Activated B cell treated with CpG ODN at 0.5 μM for 24 hours (primary cell): ENCODE measurements at regions of chr2 and their contacts with region 1.

Region 1: DNA sequence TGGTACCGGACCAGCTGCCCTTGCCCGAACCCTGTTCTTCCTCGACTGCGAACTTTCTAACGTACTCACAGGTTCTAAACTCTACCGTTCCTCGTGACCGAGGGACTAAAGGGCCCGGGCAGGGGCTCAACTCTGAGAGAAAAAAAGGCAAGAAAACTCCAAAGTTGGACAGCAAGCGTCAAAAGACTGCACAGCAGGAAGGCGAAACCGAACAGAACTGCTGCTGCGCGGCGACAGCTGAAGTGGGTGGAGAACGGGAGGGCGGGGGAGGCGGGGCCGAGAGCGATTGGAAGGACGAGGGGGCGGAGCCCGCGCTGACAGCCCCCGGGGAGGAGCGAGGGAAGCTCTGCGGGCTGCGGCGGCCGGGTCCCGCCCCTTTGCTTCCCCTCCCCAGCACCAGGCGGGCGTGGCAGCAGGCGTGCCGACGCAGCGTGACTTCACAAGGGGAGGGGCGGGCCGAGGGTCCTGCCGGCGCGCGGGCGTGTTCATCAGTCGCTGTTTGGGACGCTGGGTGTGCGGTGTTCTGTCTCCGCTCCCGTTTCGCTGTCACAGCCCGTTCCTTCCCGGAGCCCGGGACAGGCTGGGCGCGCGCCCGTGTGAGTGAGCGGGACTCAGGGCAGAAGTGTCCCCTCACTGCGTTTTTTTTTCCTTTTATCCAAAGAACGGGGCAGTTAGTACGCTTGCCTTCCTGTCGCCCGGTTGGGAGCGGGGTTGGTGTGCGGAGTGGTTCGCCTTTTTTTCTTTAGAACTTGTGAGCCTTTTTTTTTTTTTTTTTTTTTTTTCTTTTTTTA is at the start of gene NABP1:
- DNase-seq: peak; percentile 98
- ATAC-seq: peak; percentile 84
- H3K4me3 Mint-ChIP-seq: peak within 1 kb of the TSS; percentile 97
- H3K27ac Mint-ChIP-seq: peak within 1 kb of the TSS; percentile 99
- H3K4me1 Mint-ChIP-seq: peaks cover 64% of the 10 kb centered on the region
- H3K27me3 Mint-ChIP-seq: no peaks in the 10 kb centered on the region
- CTCF ChIP-seq: no peak
- total RNA-seq, gene NABP1: 69.6 and 86.0 TPM in 2 replicates

Region 2: DNA sequence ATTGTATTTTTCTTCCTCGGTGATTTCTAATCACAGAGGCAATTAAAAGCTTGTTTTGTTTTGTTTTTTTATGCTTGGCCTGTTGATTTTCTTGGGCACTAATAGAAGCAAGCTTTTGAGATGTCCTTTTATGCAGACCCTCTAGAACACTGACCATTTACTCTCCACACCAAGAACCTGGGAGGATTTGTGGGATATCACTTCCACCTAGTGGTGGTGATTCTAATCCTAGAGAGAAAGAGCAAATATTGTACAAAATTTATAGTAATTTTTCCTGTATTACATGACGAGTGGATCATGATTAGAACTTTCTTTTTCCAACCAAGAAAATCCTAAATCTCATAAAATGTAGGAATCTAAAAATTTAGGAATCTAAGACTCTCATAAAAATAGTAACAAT is 1166.7 kb before region 1 on chr2:
- CTCF ChIA-PET with region 1: no interaction called
- POLR2A ChIA-PET with region 1: interaction called, 15 read pairs
- intact Hi-C with region 1: no loop called
- DNase-seq: no peak
- ATAC-seq: no peak
- H3K4me3 Mint-ChIP-seq: no peak overlapping the region
- H3K27ac Mint-ChIP-seq: no peak overlapping the region
- H3K4me1 Mint-ChIP-seq: peaks cover 19% of the 10 kb centered on the region
- H3K27me3 Mint-ChIP-seq: no peaks in the 10 kb centered on the region
- CTCF ChIP-seq: no peak

Region 3: GRCh38 chr2:191013932-191014652 is 663.7 kb before region 1 on chr2 and contains the start of gene STAT1:
- CTCF ChIA-PET with region 1: no interaction called
- POLR2A ChIA-PET with region 1: interaction called, 17 read pairs
- intact Hi-C with region 1: loop called (anchors 2 kb)
- DNase-seq: peak; percentile 98
- ATAC-seq: peak; percentile 91
- H3K4me3 Mint-ChIP-seq: no peak within 1 kb of the TSS
- H3K27ac Mint-ChIP-seq: no peak within 1 kb of the TSS
- H3K4me1 Mint-ChIP-seq: peaks cover 29% of the 10 kb centered on the region
- H3K27me3 Mint-ChIP-seq: no peaks in the 10 kb centered on the region
- CTCF ChIP-seq: no peak
- total RNA-seq, gene STAT1: 71.2 and 85.1 TPM in 2 replicates

Region 4: DNA sequence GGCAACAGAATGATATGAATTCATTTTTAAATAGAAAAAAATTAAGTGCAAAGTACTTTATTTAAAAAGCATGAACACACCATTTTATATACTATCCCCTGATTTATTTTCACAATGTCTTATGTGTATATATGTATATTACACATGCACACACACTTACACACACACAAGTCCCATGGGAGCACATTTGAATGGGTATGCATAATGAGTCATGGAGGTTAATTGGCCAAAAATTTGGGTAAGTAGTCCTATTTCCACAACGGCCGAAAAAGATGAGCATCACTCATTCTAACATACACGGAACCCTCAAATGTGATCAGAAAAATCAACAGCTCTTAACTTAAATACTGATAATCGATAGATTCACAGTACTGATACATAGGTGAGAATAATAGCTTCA is 97.3 kb before region 1 on chr2:
- CTCF ChIA-PET with region 1: no interaction called
- POLR2A ChIA-PET with region 1: interaction called, 13 read pairs
- intact Hi-C with region 1: no loop called
- DNase-seq: no peak
- ATAC-seq: no peak
- H3K4me3 Mint-ChIP-seq: no peak overlapping the region
- H3K27ac Mint-ChIP-seq: no peak overlapping the region
- H3K4me1 Mint-ChIP-seq: peaks cover 9% of the 10 kb centered on the region
- H3K27me3 Mint-ChIP-seq: peaks cover 2% of the 10 kb centered on the region
- CTCF ChIP-seq: no peak

Region 5: DNA sequence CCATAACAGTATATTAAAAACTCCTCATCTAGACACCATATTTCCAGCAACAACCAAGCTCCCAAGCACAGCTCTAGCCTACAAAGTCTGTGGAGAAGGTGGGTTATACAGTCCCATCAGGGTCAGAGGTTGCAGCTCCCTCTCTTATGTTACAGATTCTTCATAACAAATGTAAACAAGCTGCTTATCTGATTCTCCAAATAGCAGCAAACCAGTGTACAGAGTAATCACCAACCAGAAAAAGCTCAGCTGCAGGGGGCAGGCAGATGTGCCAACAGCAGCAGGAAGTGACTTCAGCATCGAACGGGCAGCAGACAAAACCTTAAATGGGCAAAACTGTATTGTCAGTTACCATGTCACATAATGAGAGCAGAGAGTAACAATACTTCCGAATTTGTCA is 52.8 kb before region 1 on chr2:
- CTCF ChIA-PET with region 1: no interaction called
- POLR2A ChIA-PET with region 1: interaction called, 380 read pairs
- intact Hi-C with region 1: no loop called
- DNase-seq: no peak
- ATAC-seq: peak; percentile 73
- H3K4me3 Mint-ChIP-seq: no peak overlapping the region
- H3K27ac Mint-ChIP-seq: peak overlapping the region; percentile 33
- H3K4me1 Mint-ChIP-seq: peaks cover 38% of the 10 kb centered on the region
- H3K27me3 Mint-ChIP-seq: no peaks in the 10 kb centered on the region
- CTCF ChIP-seq: no peak

Region 6: DNA sequence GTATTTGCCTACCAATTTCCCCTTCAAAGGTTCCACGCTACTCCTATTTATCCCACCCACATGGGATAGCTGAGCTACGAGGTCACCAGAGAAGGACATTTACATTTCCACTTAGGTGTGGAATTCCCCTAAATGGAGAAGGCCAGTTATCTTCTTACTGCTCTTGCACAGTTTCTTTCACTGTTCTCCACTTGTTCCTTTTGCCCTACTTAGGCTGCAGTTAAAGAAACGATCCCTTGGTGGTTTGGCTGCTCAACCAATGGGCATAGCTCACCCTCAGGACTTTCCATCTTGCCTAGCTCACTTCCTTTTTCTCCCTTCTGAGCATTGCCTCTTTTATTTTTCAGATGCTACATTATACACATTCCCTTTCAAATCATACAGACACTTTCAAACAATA is 11.1 kb before region 1 on chr2:
- CTCF ChIA-PET with region 1: no interaction called
- POLR2A ChIA-PET with region 1: interaction called, 147 read pairs
- intact Hi-C with region 1: loop called (anchors 1 kb)
- DNase-seq: no peak
- ATAC-seq: peak; percentile 87
- H3K4me3 Mint-ChIP-seq: peak overlapping the region; percentile 32
- H3K27ac Mint-ChIP-seq: peak overlapping the region; percentile 77
- H3K4me1 Mint-ChIP-seq: peaks cover 22% of the 10 kb centered on the region
- H3K27me3 Mint-ChIP-seq: no peaks in the 10 kb centered on the region
- CTCF ChIP-seq: no peak

Region 7: GRCh38 chr2:191758518-191759507 is 81.0 kb after region 1 on chr2:
- CTCF ChIA-PET with region 1: no interaction called
- POLR2A ChIA-PET with region 1: no interaction called
- intact Hi-C with region 1: no loop called
- DNase-seq: peak; percentile 39
- ATAC-seq: peak; percentile 100
- H3K4me3 Mint-ChIP-seq: peak overlapping the region; percentile 13
- H3K27ac Mint-ChIP-seq: peak overlapping the region; percentile 8
- H3K4me1 Mint-ChIP-seq: peaks cover 6% of the 10 kb centered on the region
- H3K27me3 Mint-ChIP-seq: no peaks in the 10 kb centered on the region
- CTCF ChIP-seq: no peak

Region 8: DNA sequence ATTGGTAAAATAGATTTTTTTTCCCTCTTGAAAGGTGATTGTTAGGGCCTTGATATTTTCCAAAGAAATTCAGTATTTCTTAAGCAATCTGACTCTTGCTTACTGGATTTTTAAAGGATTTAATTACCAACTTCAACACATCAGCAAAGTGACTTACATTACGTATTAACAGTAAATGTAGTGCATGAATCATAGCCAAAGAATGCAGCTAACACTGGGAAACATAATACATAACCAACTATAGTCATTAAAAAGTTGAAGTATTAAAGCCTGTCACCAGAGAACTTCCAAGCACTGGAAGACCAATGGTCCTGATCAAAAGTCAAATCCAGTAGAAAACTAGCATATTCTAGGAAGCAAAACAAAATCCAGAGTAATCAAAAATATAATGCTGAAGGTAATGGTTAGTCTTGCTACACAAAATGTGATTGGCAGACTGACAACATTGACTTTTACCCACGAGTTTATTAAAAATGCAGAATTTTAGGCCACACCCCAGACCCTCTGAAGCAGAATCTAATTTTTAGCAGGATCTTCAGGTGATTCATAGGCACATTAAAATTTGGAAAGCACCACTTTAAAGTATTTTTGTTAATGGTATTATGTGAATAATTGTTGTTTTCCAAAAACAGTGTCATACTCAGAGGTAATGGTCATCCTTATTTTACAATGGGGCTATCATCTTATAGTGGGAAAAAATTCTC is 200.9 kb after region 1 on chr2:
- CTCF ChIA-PET with region 1: no interaction called
- POLR2A ChIA-PET with region 1: no interaction called
- intact Hi-C with region 1: no loop called
- DNase-seq: no peak
- ATAC-seq: no peak
- H3K4me3 Mint-ChIP-seq: no peak overlapping the region
- H3K27ac Mint-ChIP-seq: no peak overlapping the region
- H3K4me1 Mint-ChIP-seq: no peaks in the 10 kb centered on the region
- H3K27me3 Mint-ChIP-seq: no peaks in the 10 kb centered on the region
- CTCF ChIP-seq: no peak

Region 9: DNA sequence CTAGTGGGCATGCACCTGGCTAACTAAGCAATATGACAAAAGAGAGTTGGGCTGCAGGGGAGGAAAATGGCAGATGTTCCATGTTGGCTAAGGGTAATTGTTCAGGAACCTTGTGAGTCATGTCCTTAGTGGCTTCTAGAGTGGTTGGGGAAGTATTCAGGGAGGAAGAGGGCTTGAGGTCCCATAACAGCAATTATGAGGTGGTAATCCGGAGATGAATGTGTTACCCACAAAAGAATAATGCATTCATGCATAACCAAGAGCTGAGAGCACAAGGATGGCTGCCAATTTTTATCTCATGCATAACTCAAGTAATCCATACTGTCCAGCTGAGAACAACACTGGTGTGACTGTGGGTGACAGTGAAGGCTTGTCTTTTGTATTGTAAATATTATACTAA is 474.0 kb after region 1 on chr2:
- CTCF ChIA-PET with region 1: no interaction called
- POLR2A ChIA-PET with region 1: no interaction called
- intact Hi-C with region 1: no loop called
- DNase-seq: no peak
- ATAC-seq: no peak
- H3K4me3 Mint-ChIP-seq: no peak overlapping the region
- H3K27ac Mint-ChIP-seq: no peak overlapping the region
- H3K4me1 Mint-ChIP-seq: peaks cover 11% of the 10 kb centered on the region
- H3K27me3 Mint-ChIP-seq: no peaks in the 10 kb centered on the region
- CTCF ChIP-seq: no peak